MCF 10A (cell line): ENCODE measurements at regions of chr5 and their contacts with region 1.

Region 1: DNA sequence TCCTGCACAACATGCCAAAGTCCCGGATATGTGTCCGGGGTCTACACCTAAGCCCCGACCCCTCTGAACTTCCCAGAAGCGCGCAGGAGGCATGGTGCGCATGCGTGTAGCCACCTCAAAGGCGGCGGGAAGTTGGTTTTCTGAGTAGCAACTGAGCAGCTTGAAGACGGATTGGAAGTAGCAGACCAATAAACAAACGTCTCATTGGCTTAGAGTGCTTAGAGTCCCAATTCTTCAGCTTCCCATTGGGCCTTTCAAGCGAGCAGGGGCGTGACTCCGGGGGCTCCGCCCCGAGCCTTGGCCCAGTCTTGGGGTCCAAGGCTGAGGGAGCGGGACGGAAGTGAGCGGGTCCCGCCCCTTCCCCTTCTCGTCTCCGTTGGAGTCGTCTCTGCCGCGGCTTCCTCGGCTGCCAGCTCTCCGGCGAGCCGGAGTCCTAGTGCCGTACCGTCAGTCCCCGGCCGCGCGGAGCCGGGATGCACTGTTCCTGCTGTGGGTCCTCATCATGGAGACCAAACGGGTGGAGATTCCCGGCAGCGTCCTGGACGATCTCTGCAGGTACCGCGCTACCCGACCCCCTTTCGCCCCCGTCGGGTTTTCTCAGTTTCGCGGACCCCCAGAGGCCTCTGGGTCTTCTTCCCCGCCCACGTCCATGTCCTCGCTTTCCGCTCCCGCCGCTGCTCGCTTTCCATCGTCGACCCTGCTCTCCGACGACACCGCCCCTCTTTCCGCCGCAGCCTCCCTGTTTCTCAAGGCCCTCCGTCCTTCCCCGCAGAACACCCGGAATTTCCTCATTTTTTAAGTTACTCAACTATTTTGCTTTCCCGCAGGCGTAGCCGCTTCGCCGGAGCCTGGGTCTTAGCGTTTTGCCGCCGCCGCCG is at the start of gene DCP2:
- DNase-seq: peak; percentile 99
- H3K4me3 Mint-ChIP-seq: peak within 1 kb of the TSS; percentile 97
- H3K27ac Mint-ChIP-seq: peak within 1 kb of the TSS; percentile 98
- H3K4me1 Mint-ChIP-seq: peaks cover 15% of the 10 kb centered on the region
- H3K27me3 Mint-ChIP-seq: no peaks in the 10 kb centered on the region
- CTCF ChIP-seq: no peak
- total RNA-seq, gene DCP2: 32.7 and 34.1 TPM in 2 replicates

Region 2: GRCh38 chr5:112958093-112959088 is 18.3 kb before region 1 on chr5:
- CTCF ChIA-PET with region 1: interaction called, 9 read pairs
- POLR2A ChIA-PET with region 1: interaction called, 15 read pairs
- intact Hi-C with region 1: no loop called
- DNase-seq: peak; percentile 98
- H3K4me3 Mint-ChIP-seq: no peak overlapping the region
- H3K27ac Mint-ChIP-seq: no peak overlapping the region
- H3K4me1 Mint-ChIP-seq: peaks cover 36% of the 10 kb centered on the region
- H3K27me3 Mint-ChIP-seq: no peaks in the 10 kb centered on the region
- CTCF ChIP-seq: no peak

Region 3: GRCh38 chr5:113123618-113124017 is 146.9 kb after region 1 on chr5:
- CTCF ChIA-PET with region 1: no interaction called
- POLR2A ChIA-PET with region 1: no interaction called
- intact Hi-C with region 1: no loop called
- DNase-seq: peak; percentile 31
- H3K4me3 Mint-ChIP-seq: no peak overlapping the region
- H3K27ac Mint-ChIP-seq: no peak overlapping the region
- H3K4me1 Mint-ChIP-seq: no peaks in the 10 kb centered on the region
- H3K27me3 Mint-ChIP-seq: no peaks in the 10 kb centered on the region
- CTCF ChIP-seq: no peak